Naive thymus-derived CD4-positive, alpha-beta T cell (primary cell): ENCODE measurements at regions of chr9 and their contacts with region 1.

Region 1: DNA sequence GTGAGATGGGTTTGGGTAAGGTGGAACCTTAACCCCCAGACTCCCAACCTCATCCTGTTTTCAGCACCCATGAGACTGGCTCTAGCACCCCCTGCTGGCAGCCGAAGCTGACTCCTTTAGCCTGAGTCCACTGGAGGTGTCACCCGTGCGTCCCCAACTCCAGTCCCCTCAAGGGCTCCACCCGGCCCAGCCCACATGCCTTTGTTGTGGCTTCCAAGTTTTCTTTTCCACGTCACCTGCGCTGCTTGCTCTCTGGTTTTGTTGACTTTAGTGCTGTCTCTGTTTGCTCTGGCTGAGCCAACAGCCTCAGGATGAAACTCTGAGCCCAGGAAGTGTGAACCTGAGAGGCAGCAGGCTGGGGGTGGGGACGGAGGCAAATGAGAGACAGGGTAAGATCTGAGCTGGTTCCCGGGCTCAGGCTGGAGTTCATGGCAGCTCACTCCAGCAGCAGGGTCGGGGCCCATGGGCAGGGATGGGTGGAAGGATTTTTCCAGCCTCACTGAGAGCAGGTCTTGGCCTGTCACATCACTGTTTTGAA is 13.2 kb upstream of the AQP7 start:
- DNase-seq: peak; percentile 82 to 98 (median 96)
- ATAC-seq: peak; percentile 97
- H3K4me3 ChIP-seq: peak overlapping the region; percentile 25
- H3K4me3 Mint-ChIP-seq: peak overlapping the region; percentile 74 to 89 (median 84)
- H3K27ac ChIP-seq: peak overlapping the region; percentile 75
- H3K27ac Mint-ChIP-seq: peak overlapping the region; percentile 93 to 99 (median 97)
- H3K4me1 ChIP-seq: peaks cover 34 to 44% of the 10 kb centered on the region in 2 donors
- H3K4me1 Mint-ChIP-seq: peaks cover 31 to 51% (median 45%) of the 10 kb centered on the region in 7 donors
- H3K27me3 ChIP-seq: no peaks in the 10 kb centered on the region
- H3K27me3 Mint-ChIP-seq: peaks cover 0 to 8% (median 0%) of the 10 kb centered on the region in 5 donors

Region 2: GRCh38 chr9:33116860-33117259 is 298.7 kb before region 1 on chr9:
- CTCF ChIA-PET with region 1: no interaction called
- POLR2A ChIA-PET with region 1: no interaction called
- intact Hi-C with region 1: no loop called
- DNase-seq: no peak
- ATAC-seq: peak; percentile 35
- H3K4me3 ChIP-seq: no peak overlapping the region
- H3K4me3 Mint-ChIP-seq: peak overlapping the region in 3 of 10 donors; percentile 41 to 76 (median 61)
- H3K27ac ChIP-seq: no peak overlapping the region
- H3K27ac Mint-ChIP-seq: peak overlapping the region in 6 of 9 donors; percentile 3 to 81 (median 62)
- H3K4me1 ChIP-seq: peaks cover 13 to 16% of the 10 kb centered on the region in 2 donors
- H3K4me1 Mint-ChIP-seq: peaks cover 21 to 42% (median 30%) of the 10 kb centered on the region in 7 donors
- H3K27me3 ChIP-seq: no peaks in the 10 kb centered on the region
- H3K27me3 Mint-ChIP-seq: no peaks in the 10 kb centered on the region

Region 3: GRCh38 chr9:33297432-33297831 is 118.1 kb before region 1 on chr9:
- CTCF ChIA-PET with region 1: no interaction called
- POLR2A ChIA-PET with region 1: no interaction called
- intact Hi-C with region 1: no loop called
- DNase-seq: peak in 1 of 9 donors; percentile 9
- ATAC-seq: peak; percentile 86
- H3K4me3 ChIP-seq: no peak overlapping the region
- H3K4me3 Mint-ChIP-seq: peak overlapping the region; percentile 14 to 86 (median 65)
- H3K27ac ChIP-seq: peak overlapping the region; percentile 41
- H3K27ac Mint-ChIP-seq: peak overlapping the region; percentile 13 to 88 (median 78)
- H3K4me1 ChIP-seq: peaks cover 6 to 52% of the 10 kb centered on the region in 2 donors
- H3K4me1 Mint-ChIP-seq: peaks cover 55 to 89% (median 84%) of the 10 kb centered on the region in 7 donors
- H3K27me3 ChIP-seq: no peaks in the 10 kb centered on the region
- H3K27me3 Mint-ChIP-seq: no peaks in the 10 kb centered on the region

Region 4: DNA sequence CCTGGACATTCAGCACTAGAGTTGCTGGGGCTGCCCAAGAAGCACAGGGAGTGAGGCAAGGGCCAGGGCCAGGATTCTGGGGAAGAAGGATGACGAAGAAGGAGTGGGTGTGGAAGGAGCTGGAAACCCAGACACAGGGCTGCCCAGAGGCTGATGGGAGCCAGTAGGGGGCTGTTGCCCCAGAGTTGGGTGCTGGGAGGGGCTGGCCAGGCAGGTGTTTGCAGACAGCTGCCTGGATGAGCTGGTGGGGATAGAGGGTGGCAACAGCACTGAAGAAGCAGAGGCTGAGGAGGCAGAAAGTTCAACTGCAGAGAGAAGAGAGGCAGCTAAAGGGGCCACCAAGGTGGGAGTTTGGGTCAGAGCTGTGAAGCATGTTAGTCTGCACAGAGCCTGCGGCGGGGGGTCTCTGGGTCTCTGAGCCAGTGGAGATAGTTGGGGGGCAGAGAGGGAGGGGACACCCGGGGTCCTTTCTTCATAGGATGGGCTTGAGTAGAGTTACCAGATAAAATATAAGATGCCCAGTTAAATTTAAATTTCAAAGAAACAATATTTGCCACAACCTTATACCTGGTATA is 10.7 kb before region 1 on chr9:
- CTCF ChIA-PET with region 1: interaction called, 53 read pairs
- POLR2A ChIA-PET with region 1: interaction called, 40 read pairs
- intact Hi-C with region 1: loop called (anchors 1 kb)
- DNase-seq: no peak
- ATAC-seq: no peak
- H3K4me3 ChIP-seq: no peak overlapping the region
- H3K4me3 Mint-ChIP-seq: no peak overlapping the region
- H3K27ac ChIP-seq: no peak overlapping the region
- H3K27ac Mint-ChIP-seq: peak overlapping the region in 8 of 9 donors; percentile 12 to 82 (median 76)
- H3K4me1 ChIP-seq: no peaks in the 10 kb centered on the region
- H3K4me1 Mint-ChIP-seq: peaks cover 4 to 14% (median 10%) of the 10 kb centered on the region in 7 donors
- H3K27me3 ChIP-seq: no peaks in the 10 kb centered on the region
- H3K27me3 Mint-ChIP-seq: peaks cover 0 to 4% (median 0%) of the 10 kb centered on the region in 5 donors

Region 5: DNA sequence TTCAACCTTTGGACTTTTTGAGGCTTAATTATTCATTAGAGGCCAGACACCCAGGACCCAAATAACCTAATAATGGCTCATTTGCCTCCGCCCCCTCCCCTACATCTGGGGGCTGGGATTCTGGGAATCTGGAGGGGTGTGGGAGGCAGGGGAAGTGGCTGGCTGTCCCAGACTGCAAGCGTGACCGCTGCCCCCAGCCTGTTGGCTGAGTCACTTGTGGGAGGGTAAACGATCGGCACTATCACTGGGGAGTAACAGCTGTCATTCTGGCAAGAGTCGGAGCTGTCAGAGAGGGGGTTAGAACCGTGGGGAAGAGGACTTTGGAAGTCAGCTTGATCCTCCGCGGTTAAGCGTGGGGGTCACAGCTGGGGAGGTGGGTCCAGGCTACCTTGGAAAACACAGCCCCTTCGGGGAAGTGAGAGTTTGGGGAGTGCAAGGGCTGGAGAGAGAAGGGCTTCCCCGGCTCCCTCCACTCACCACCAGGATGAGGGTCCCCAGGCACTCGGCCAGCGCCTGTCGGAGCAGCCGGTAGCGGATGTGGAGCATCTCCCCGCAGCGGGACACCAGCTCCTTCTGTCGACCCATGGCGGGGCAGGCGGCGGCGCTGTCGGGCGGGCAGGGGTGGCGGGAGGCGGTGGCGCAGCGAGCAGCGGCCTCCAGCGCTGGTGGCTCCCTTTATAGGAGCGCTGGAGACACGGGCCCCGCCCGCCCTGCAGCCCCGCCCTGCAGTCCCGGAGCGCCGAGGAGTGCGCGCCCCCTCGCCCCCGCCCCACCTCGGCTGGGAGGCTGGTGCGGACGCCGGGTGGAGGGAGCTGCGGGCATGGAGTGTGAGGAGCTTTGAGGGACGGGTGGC is 31.6 kb after region 1 on chr9 and contains the start of gene AQP3:
- CTCF ChIA-PET with region 1: interaction called, 134 read pairs
- POLR2A ChIA-PET with region 1: interaction called, 102 read pairs
- intact Hi-C with region 1: loop called (anchors 1 kb)
- DNase-seq: peak; percentile 59 to 77 (median 72)
- ATAC-seq: peak; percentile 79
- H3K4me3 ChIP-seq: peak within 1 kb of the TSS; percentile 86
- H3K4me3 Mint-ChIP-seq: peak within 1 kb of the TSS; percentile 89 to 98 (median 94)
- H3K27ac ChIP-seq: peak within 1 kb of the TSS; percentile 85
- H3K27ac Mint-ChIP-seq: peak within 1 kb of the TSS; percentile 81 to 97 (median 96)
- H3K4me1 ChIP-seq: peaks cover 27 to 36% of the 10 kb centered on the region in 2 donors
- H3K4me1 Mint-ChIP-seq: peaks cover 23 to 60% (median 45%) of the 10 kb centered on the region in 7 donors
- H3K27me3 ChIP-seq: no peaks in the 10 kb centered on the region
- H3K27me3 Mint-ChIP-seq: no peaks in the 10 kb centered on the region
- total RNA-seq, gene AQP3: 53.3 to 173 (median 110) TPM

Region 6: GRCh38 chr9:33466565-33467495 is 51.3 kb after region 1 on chr9:
- CTCF ChIA-PET with region 1: interaction called, 26 read pairs
- POLR2A ChIA-PET with region 1: interaction called, 43 read pairs
- intact Hi-C with region 1: loop called (anchors 1 kb)
- DNase-seq: peak; percentile 42 to 82 (median 67)
- ATAC-seq: peak; percentile 84
- H3K4me3 ChIP-seq: no peak overlapping the region
- H3K4me3 Mint-ChIP-seq: peak overlapping the region in 1 of 10 donors; percentile 31
- H3K27ac ChIP-seq: peak overlapping the region; percentile 18
- H3K27ac Mint-ChIP-seq: peak overlapping the region in 6 of 9 donors; percentile 31 to 76 (median 43)
- H3K4me1 ChIP-seq: no peaks in the 10 kb centered on the region
- H3K4me1 Mint-ChIP-seq: peaks cover 5 to 12% (median 7%) of the 10 kb centered on the region in 7 donors
- H3K27me3 ChIP-seq: no peaks in the 10 kb centered on the region
- H3K27me3 Mint-ChIP-seq: no peaks in the 10 kb centered on the region

Region 7: GRCh38 chr9:33510264-33511183 is 95.0 kb after region 1 on chr9:
- CTCF ChIA-PET with region 1: no interaction called
- POLR2A ChIA-PET with region 1: no interaction called
- intact Hi-C with region 1: loop called in 1 of 2 experiments (anchors 5 kb)
- DNase-seq: peak; percentile 10 to 50 (median 22)
- ATAC-seq: peak; percentile 78
- H3K4me3 ChIP-seq: peak overlapping the region; percentile 65
- H3K4me3 Mint-ChIP-seq: peak overlapping the region; percentile 93 to 98 (median 96)
- H3K27ac ChIP-seq: peak overlapping the region; percentile 62
- H3K27ac Mint-ChIP-seq: peak overlapping the region in 8 of 9 donors; percentile 65 to 97 (median 86)
- H3K4me1 ChIP-seq: no peaks in the 10 kb centered on the region
- H3K4me1 Mint-ChIP-seq: peaks cover 0 to 11% (median 7%) of the 10 kb centered on the region in 7 donors
- H3K27me3 ChIP-seq: no peaks in the 10 kb centered on the region
- H3K27me3 Mint-ChIP-seq: peaks cover 0 to 16% (median 5%) of the 10 kb centered on the region in 5 donors